ENCODE measurements at regions of chr22 and their contacts with region 1.

Region 1: GRCh38 chr22:38872172-38872830 is at the start of gene CBX6:
- DNase-seq: peak; percentile 97
- ATAC-seq: peak; percentile 73
- H3K4me3 Mint-ChIP-seq: peak within 1 kb of the TSS; percentile 92
- H3K27ac Mint-ChIP-seq: peak within 1 kb of the TSS; percentile 83
- H3K4me1 Mint-ChIP-seq: peaks cover 53% of the 10 kb centered on the region
- H3K27me3 Mint-ChIP-seq: peaks cover 2% of the 10 kb centered on the region
- CTCF ChIP-seq: no peak
- total RNA-seq, gene CBX6: 65.6 and 71.8 TPM in 2 replicates

Region 2: DNA sequence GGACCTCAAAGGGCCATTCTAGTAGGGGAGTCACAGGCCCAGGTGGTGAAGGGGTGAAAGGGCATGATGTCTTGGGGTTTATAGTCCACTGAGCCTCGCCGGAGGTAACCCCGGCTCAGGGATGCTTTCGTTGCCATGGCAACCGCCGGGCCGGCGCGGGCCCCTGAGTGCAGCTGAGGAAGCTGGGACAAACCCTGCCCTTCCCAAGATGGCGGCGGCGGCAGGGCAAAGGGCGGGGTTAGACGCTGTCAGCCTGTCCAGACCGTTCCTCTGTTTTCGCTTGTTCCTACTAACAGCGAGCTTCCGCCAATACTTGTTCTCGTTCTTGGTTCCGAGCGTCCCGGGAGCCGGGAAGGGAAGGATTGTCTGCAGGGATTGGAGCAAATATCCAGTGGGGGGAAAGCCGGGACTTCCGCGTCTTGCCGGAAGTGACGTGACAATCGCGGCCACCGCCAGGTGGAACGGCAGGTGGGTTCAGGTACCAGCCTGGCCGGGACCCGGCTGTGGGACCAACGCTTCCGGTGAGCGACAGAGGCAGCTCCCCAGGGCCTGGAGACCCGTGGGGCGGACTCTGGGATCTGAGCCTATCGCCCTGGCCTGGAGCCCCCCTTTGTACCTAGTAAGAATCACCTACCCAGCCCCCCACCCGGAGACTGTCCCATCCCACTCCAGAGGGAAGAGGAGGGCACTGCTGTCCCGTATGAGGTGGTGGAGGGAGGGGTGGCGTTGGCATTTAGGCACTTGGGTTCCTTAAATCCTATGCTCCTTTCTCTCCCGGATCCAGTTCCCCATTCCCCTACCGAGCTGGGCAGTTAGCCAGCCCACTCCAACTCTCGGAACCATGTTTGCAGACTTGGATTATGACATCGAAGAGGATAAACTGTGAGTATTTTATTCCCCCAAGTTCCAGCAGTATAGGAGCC is 815.1 kb before region 1 on chr22 and contains the start of gene PICK1:
- CTCF ChIA-PET with region 1: no interaction called
- POLR2A ChIA-PET with region 1: interaction called, 3 read pairs
- intact Hi-C with region 1: loop called (anchors 5 kb)
- DNase-seq: peak; percentile 75
- ATAC-seq: peak; percentile 78
- H3K4me3 Mint-ChIP-seq: peak within 1 kb of the TSS; percentile 98
- H3K27ac Mint-ChIP-seq: peak within 1 kb of the TSS; percentile 97
- H3K4me1 Mint-ChIP-seq: peaks cover 19% of the 10 kb centered on the region
- H3K27me3 Mint-ChIP-seq: peaks cover 7% of the 10 kb centered on the region
- CTCF ChIP-seq: no peak
- total RNA-seq, gene PICK1: 21.5 and 25.5 TPM in 2 replicates

Region 3: DNA sequence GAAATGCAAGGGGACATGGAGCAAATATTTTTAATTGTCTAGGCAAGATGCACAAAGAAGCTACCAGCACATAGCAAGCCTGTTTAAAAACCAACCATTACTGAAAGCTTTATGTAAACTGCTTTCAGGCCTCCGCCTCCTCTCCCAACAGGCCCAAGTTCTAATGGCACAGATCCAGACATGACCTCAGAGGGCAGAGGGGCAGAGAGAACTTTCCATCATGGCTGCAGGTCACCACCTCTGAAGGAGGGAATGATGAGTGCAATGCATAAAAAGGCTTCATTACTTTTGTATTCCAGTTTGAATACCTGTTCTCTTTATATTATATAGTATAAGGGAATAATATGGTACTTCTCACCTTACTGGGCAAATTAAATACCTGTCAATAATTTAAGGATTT is 381.4 kb before region 1 on chr22:
- CTCF ChIA-PET with region 1: no interaction called
- POLR2A ChIA-PET with region 1: no interaction called
- intact Hi-C with region 1: no loop called
- DNase-seq: no peak
- ATAC-seq: no peak
- H3K4me3 Mint-ChIP-seq: no peak overlapping the region
- H3K27ac Mint-ChIP-seq: peak overlapping the region; percentile 76
- H3K4me1 Mint-ChIP-seq: peaks cover 5% of the 10 kb centered on the region
- H3K27me3 Mint-ChIP-seq: no peaks in the 10 kb centered on the region
- CTCF ChIP-seq: no peak

Region 4: DNA sequence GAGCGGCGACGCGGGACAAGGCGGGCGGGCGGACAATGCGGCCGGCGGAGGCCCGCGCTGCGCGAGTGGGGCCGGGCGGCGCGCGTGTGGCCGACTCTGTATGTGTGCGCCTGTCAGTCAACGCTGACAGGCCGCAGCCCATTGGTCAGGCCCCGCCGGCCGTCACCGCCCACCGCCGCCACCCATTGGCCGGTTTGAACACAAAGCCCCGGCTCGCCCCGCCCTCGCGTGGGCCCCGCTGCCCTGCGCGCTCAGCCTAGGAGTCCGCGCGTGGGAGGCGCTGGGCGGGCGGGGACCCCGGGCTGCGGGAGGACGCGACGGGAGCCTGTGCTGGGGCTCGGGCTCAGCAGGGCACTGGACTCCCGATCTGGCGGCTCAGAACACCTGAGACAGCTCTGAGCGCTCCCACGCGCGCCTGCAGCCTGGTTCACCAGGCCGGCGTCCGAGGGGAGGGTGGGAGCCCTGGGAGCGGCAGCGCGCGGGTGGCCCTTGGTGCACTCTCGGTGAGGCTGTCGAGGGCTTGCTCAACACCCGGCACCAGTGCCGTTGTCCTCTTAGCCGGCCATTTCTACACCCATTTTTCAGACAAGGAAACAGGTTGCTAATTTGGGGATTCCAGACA is 116.3 kb before region 1 on chr22 and contains the start of gene SUN2:
- CTCF ChIA-PET with region 1: no interaction called
- POLR2A ChIA-PET with region 1: interaction called, 4 read pairs
- intact Hi-C with region 1: loop called (anchors 1 kb)
- DNase-seq: peak; percentile 92
- ATAC-seq: peak; percentile 75
- H3K4me3 Mint-ChIP-seq: peak within 1 kb of the TSS; percentile 92
- H3K27ac Mint-ChIP-seq: peak within 1 kb of the TSS; percentile 99
- H3K4me1 Mint-ChIP-seq: peaks cover 71% of the 10 kb centered on the region
- H3K27me3 Mint-ChIP-seq: no peaks in the 10 kb centered on the region
- CTCF ChIP-seq: no peak
- total RNA-seq, gene SUN2: 122 and 146 TPM in 2 replicates

Region 5: GRCh38 chr22:38973289-38974169 is 101.2 kb after region 1 on chr22:
- CTCF ChIA-PET with region 1: interaction called, 8 read pairs
- POLR2A ChIA-PET with region 1: no interaction called
- intact Hi-C with region 1: loop called (anchors 1 kb)
- DNase-seq: no peak
- ATAC-seq: peak; percentile 98
- H3K4me3 Mint-ChIP-seq: no peak overlapping the region
- H3K27ac Mint-ChIP-seq: peak overlapping the region; percentile 24
- H3K4me1 Mint-ChIP-seq: peaks cover 2% of the 10 kb centered on the region
- H3K27me3 Mint-ChIP-seq: peaks cover 6% of the 10 kb centered on the region
- CTCF ChIP-seq: no peak

Region 6: GRCh38 chr22:39117585-39118191 is 245.4 kb after region 1 on chr22:
- CTCF ChIA-PET with region 1: interaction called, 5 read pairs
- POLR2A ChIA-PET with region 1: no interaction called
- intact Hi-C with region 1: loop called (anchors 1 kb)
- DNase-seq: peak; percentile 37
- ATAC-seq: peak; percentile 64
- H3K4me3 Mint-ChIP-seq: peak overlapping the region; percentile 67
- H3K27ac Mint-ChIP-seq: peak overlapping the region; percentile 86
- H3K4me1 Mint-ChIP-seq: peaks cover 52% of the 10 kb centered on the region
- H3K27me3 Mint-ChIP-seq: no peaks in the 10 kb centered on the region
- CTCF ChIP-seq: no peak

Region 7: GRCh38 chr22:39306581-39307361 is 434.5 kb after region 1 on chr22:
- CTCF ChIA-PET with region 1: interaction called, 11 read pairs
- POLR2A ChIA-PET with region 1: no interaction called
- intact Hi-C with region 1: loop called (anchors 1 kb)
- DNase-seq: no peak
- ATAC-seq: peak; percentile 29
- H3K4me3 Mint-ChIP-seq: no peak overlapping the region
- H3K27ac Mint-ChIP-seq: no peak overlapping the region
- H3K4me1 Mint-ChIP-seq: peaks cover 17% of the 10 kb centered on the region
- H3K27me3 Mint-ChIP-seq: no peaks in the 10 kb centered on the region
- CTCF ChIP-seq: no peak